GM12878 (cell line): ENCODE measurements at regions of chr1 and their contacts with region 1.

Region 1: DNA sequence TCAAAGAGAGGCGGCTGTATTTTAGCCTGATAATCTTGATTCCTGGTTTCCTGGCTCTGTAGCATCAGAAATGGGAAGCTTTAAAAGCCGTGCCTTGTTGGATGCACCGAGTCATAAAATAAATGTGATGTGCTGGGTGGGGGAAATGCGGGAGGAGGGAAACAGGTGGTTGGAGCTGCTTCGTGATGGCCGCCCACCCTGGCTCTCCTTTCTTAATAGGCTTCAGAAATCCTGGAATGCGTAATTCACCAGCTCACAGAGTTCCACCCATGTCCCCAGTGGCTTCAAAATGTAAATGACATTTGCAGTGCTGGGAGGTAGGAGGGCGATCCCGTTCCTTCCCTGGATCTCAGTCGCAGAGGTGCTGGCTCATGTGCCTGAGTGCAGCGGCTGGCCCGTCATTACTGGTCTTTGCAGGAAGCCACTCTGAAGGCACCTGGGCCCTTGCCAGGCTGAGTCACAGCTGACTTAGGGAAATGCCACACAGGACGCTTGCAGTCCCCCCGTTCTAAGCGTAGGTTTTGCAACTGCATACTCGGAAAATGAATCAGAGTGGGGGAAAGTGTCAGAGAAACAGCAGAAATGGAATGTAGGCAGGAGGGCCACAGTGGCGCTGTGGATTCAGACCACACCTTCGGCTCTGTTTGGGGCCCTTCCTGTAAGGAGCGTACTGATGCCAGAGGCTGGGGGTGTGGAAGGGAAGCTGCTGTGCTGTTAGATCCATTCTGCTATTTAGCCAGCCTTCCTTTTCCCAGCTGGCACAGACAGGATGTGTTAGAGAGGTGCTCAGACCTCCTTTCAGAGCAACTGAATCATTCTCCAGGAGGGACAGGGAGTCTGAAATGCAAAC is 37.6 kb downstream of the GALNT2 start:
- DNase-seq: peak; percentile 69
- ATAC-seq: peak; percentile 84
- H3K4me3 ChIP-seq: 0 out of 2 replicates have a peak overlapping the region, but pooled peaks have one; percentile 3
- H3K27ac ChIP-seq: peak overlapping the region; percentile 63
- H3K4me1 ChIP-seq: peaks cover 53% of the 10 kb centered on the region
- H3K27me3 ChIP-seq: no peaks in the 10 kb centered on the region
- CTCF ChIP-seq: no peak
- EP300 ChIP-seq: peak in 1 of 2 experiments; percentile 16; a peak in 1 of 4 replicates
- POLR2A ChIP-seq: 0 out of 2 replicates have a peak, but pooled peaks have one; percentile 15
- RAD21 ChIP-seq: no peak

Region 2: GRCh38 chr1:230066466-230067404 is 37.9 kb before region 1 on chr1 and contains the start of gene GALNT2:
- CTCF ChIA-PET with region 1: interaction called, 10 read pairs
- POLR2A ChIA-PET with region 1: interaction called, 5 read pairs
- RAD21 ChIA-PET with region 1: interaction called, 12 read pairs
- SMC1A ChIA-PET with region 1: interaction called, 14 read pairs
- in situ Hi-C with region 1: no loop called
- intact Hi-C with region 1: loop called (anchors 2 kb)
- DNase-seq: peak; percentile 48
- ATAC-seq: peak; percentile 83
- H3K4me3 ChIP-seq: peak within 1 kb of the TSS; percentile 96
- H3K27ac ChIP-seq: peak within 1 kb of the TSS; percentile 77
- H3K4me1 ChIP-seq: no peaks in the 10 kb centered on the region; the same call in 1 of the 2 replicates
- H3K27me3 ChIP-seq: no peaks in the 10 kb centered on the region
- CTCF ChIP-seq: no peak
- EP300 ChIP-seq: peak; percentile 36 to 56; a peak in 1 of 4 replicates
- POLR2A ChIP-seq: peak; percentile 78
- RAD21 ChIP-seq: peak; percentile 20; the same call in 1 of the 2 replicates
- polyA plus RNA-seq, gene GALNT2: 0.52 to 1.2 TPM

Region 3: GRCh38 chr1:230228236-230228897 is 123.7 kb after region 1 on chr1:
- CTCF ChIA-PET with region 1: no interaction called
- POLR2A ChIA-PET with region 1: no interaction called
- RAD21 ChIA-PET with region 1: no interaction called
- SMC1A ChIA-PET with region 1: no interaction called
- in situ Hi-C with region 1: no loop called
- intact Hi-C with region 1: no loop called
- DNase-seq: no peak
- ATAC-seq: no peak
- H3K4me3 ChIP-seq: no peak overlapping the region
- H3K27ac ChIP-seq: no peak overlapping the region
- H3K4me1 ChIP-seq: no peaks in the 10 kb centered on the region; the same call in 1 of the 2 replicates
- H3K27me3 ChIP-seq: no peaks in the 10 kb centered on the region
- CTCF ChIP-seq: no peak
- EP300 ChIP-seq: no peak
- POLR2A ChIP-seq: no peak
- RAD21 ChIP-seq: no peak